Head of caudate nucleus (tissue), 42 donors: ENCODE measurements at regions of chr5 and their contacts with region 1.

Region 1: GRCh38 chr5:131263648-131264450 is at the start of gene CDC42SE2:
- DNase-seq: peak; percentile 52 to 94 (median 86)

Region 2: DNA sequence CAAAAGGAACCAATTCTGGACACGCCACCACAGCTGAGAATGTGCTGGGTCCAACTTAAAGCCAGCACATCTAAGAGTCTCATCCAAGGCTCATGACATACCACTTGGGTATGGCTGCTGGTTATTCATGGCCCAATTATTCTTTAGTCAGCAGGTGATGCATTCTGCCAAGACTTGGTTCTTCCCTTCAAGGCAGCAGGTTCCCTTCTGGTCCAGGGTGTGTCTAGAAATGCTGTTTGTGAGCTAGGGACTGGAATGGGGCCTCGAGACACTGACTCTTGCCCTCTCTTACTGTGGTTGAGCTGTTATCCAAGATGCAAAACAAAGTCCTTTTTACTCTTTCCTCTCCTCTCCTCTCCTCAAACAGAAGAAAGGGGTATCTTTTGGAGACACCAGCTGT is 621.4 kb before region 1 on chr5:
- intact Hi-C with region 1: no loop called
- DNase-seq: no peak

Region 3: DNA sequence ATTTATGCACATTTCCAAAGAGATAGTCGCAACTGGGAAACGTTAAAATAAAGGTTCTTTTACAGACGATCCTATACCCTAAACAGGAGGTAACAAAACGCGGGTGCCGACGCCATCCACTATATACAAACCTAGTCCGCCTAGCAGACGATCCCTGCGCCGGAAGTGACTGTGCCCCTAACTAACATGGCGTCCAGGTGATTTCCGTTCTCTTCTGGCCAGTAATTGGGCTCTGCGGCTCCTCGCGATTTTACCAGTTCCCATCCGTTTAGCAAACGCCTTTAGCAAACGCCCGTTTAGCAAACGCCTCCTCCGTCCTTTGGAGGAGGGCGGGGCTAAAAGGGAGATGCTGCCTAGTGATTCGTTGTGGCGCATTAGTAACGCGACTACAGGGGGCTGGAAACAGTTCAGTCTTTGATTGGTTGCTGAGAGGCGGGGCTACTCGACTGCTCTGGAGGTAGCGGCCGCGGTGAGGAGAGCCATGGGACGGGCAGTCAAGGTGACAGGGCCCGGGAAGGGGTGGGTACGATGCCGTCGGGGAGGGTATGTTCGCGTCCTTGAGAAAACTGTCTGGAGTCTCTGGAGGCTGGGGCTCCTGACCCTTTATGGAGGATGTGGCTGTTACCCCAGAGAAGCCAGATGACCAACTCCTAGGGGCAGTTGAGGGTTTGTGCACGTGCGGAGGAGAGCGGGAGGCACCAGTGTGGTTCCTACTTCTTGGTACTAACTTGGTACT is 93.1 kb before region 1 on chr5 and contains the start of gene LYRM7:
- intact Hi-C with region 1: loop called (anchors 2 kb)
- DNase-seq: peak; percentile 89 to 99 (median 97)

Region 4: GRCh38 chr5:131394128-131394527 is 130.3 kb after region 1 on chr5:
- intact Hi-C with region 1: loop called (anchors 10 kb)
- DNase-seq: no peak

Region 5: DNA sequence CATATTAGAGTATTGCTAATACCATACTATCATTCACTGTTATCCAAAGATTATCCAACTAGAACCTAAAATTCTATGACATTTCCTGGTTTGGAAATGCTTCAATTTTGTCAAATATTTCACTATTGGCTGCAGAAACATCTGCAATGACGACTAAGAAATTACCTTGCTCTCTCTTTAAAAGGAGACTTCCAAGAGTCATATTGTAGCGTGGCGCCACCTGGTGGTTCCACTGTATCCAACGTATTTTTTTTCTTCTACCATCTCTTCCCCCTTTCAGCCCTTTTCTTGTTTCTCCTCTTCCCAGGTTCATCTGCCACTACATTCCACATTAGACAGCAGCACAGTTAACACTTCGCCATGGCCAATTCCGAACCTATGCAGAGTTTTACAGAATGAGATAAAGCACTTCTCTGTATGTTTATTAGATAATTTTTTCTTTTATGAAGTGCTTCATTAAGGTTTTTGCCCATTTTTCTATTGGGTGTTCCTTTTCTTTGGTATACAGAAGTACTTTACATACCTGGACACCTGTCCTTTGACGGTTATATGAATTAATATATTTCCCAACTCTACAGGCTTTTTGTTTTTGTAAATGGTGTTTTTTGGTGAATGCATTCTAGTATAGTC is 153.5 kb after region 1 on chr5:
- intact Hi-C with region 1: no loop called
- DNase-seq: peak; percentile 55 to 95 (median 84)